CD4-positive, alpha-beta T cell (primary cell): ENCODE measurements at regions of chr19 and their contacts with region 1.

Region 1: GRCh38 chr19:53537480-53538383 is at the start of gene ZNF331:
- DNase-seq: peak; percentile 77 to 97 (median 88)
- ATAC-seq: peak; percentile 74
- H3K4me3 ChIP-seq: peak within 1 kb of the TSS; percentile 91
- H3K4me3 Mint-ChIP-seq: peak within 1 kb of the TSS; percentile 98
- H3K27ac ChIP-seq: peak within 1 kb of the TSS; percentile 89 to 95
- H3K27ac Mint-ChIP-seq: peak within 1 kb of the TSS; percentile 98
- H3K4me1 ChIP-seq: peaks cover 21% of the 10 kb centered on the region
- H3K4me1 Mint-ChIP-seq: peaks cover 44% of the 10 kb centered on the region
- H3K27me3 ChIP-seq: no peaks in the 10 kb centered on the region
- H3K27me3 Mint-ChIP-seq: peaks cover 9% of the 10 kb centered on the region
- CTCF ChIP-seq: no peak
- total RNA-seq, gene ZNF331: 428 to 437 TPM

Region 2: GRCh38 chr19:53553884-53554791 is 16.4 kb after region 1 on chr19:
- CTCF ChIA-PET with region 1: interaction called, 5 read pairs
- POLR2A ChIA-PET with region 1: interaction called, 7 read pairs
- intact Hi-C with region 1: loop called (anchors 1 kb)
- DNase-seq: peak; percentile 81 to 98 (median 91)
- ATAC-seq: peak; percentile 68
- H3K4me3 ChIP-seq: peak overlapping the region; percentile 89
- H3K4me3 Mint-ChIP-seq: peak overlapping the region; percentile 96
- H3K27ac ChIP-seq: peak overlapping the region; percentile 82 to 98
- H3K27ac Mint-ChIP-seq: peak overlapping the region; percentile 99
- H3K4me1 ChIP-seq: peaks cover 17% of the 10 kb centered on the region
- H3K4me1 Mint-ChIP-seq: peaks cover 42% of the 10 kb centered on the region
- H3K27me3 ChIP-seq: no peaks in the 10 kb centered on the region
- H3K27me3 Mint-ChIP-seq: peaks cover 11% of the 10 kb centered on the region
- CTCF ChIP-seq: no peak

Region 3: GRCh38 chr19:53696951-53697350 is 159.2 kb after region 1 on chr19:
- CTCF ChIA-PET with region 1: no interaction called
- POLR2A ChIA-PET with region 1: no interaction called
- intact Hi-C with region 1: no loop called
- DNase-seq: no peak
- ATAC-seq: no peak
- H3K4me3 ChIP-seq: no peak overlapping the region
- H3K4me3 Mint-ChIP-seq: no peak overlapping the region
- H3K27ac ChIP-seq: no peak overlapping the region
- H3K27ac Mint-ChIP-seq: no peak overlapping the region
- H3K4me1 ChIP-seq: no peaks in the 10 kb centered on the region
- H3K4me1 Mint-ChIP-seq: no peaks in the 10 kb centered on the region
- H3K27me3 ChIP-seq: no peaks in the 10 kb centered on the region
- H3K27me3 Mint-ChIP-seq: no peaks in the 10 kb centered on the region
- CTCF ChIP-seq: no peak